ENCODE measurements at regions of chr22 and their contacts with region 1.

Region 1: GRCh38 chr22:36301384-36301828 is 48.5 kb downstream of the APOL1 start:
- DNase-seq: peak; percentile 88
- H3K4me3 Mint-ChIP-seq: no peak overlapping the region
- H3K27ac Mint-ChIP-seq: peak overlapping the region; percentile 67
- H3K4me1 Mint-ChIP-seq: peaks cover 8% of the 10 kb centered on the region
- H3K27me3 Mint-ChIP-seq: no peaks in the 10 kb centered on the region

Region 2: GRCh38 chr22:36162127-36163034 is 139.0 kb before region 1 on chr22:
- CTCF ChIA-PET with region 1: no interaction called
- POLR2A ChIA-PET with region 1: no interaction called
- intact Hi-C with region 1: no loop called
- DNase-seq: peak; percentile 37
- H3K4me3 Mint-ChIP-seq: peak overlapping the region; percentile 12
- H3K27ac Mint-ChIP-seq: peak overlapping the region; percentile 96
- H3K4me1 Mint-ChIP-seq: peaks cover 67% of the 10 kb centered on the region
- H3K27me3 Mint-ChIP-seq: no peaks in the 10 kb centered on the region

Region 3: GRCh38 chr22:36201630-36202319 is 99.6 kb before region 1 on chr22 and contains the start of gene APOL4:
- CTCF ChIA-PET with region 1: no interaction called
- POLR2A ChIA-PET with region 1: no interaction called
- intact Hi-C with region 1: no loop called
- DNase-seq: no peak
- H3K4me3 Mint-ChIP-seq: no peak within 1 kb of the TSS
- H3K27ac Mint-ChIP-seq: no peak within 1 kb of the TSS
- H3K4me1 Mint-ChIP-seq: peaks cover 14% of the 10 kb centered on the region
- H3K27me3 Mint-ChIP-seq: peaks cover 3% of the 10 kb centered on the region
- total RNA-seq, gene APOL4: 0.53 to 0.67 TPM

Region 4: GRCh38 chr22:36277482-36278291 is 23.7 kb before region 1 on chr22:
- CTCF ChIA-PET with region 1: interaction called, 10 read pairs
- POLR2A ChIA-PET with region 1: interaction called, 5 read pairs
- intact Hi-C with region 1: no loop called
- DNase-seq: peak; percentile 86
- H3K4me3 Mint-ChIP-seq: peak overlapping the region; percentile 37
- H3K27ac Mint-ChIP-seq: peak overlapping the region; percentile 75
- H3K4me1 Mint-ChIP-seq: peaks cover 39% of the 10 kb centered on the region
- H3K27me3 Mint-ChIP-seq: no peaks in the 10 kb centered on the region

Region 5: GRCh38 chr22:36311386-36312358 is 10.3 kb after region 1 on chr22:
- CTCF ChIA-PET with region 1: interaction called, 21 read pairs
- POLR2A ChIA-PET with region 1: no interaction called
- intact Hi-C with region 1: no loop called
- DNase-seq: no peak
- H3K4me3 Mint-ChIP-seq: no peak overlapping the region
- H3K27ac Mint-ChIP-seq: peak overlapping the region; percentile 54
- H3K4me1 Mint-ChIP-seq: peaks cover 2% of the 10 kb centered on the region
- H3K27me3 Mint-ChIP-seq: no peaks in the 10 kb centered on the region

Region 6: GRCh38 chr22:36379593-36380361 is 78.4 kb after region 1 on chr22:
- CTCF ChIA-PET with region 1: interaction called, 14 read pairs
- POLR2A ChIA-PET with region 1: no interaction called
- intact Hi-C with region 1: no loop called
- DNase-seq: peak; percentile 59
- H3K4me3 Mint-ChIP-seq: peak overlapping the region; percentile 67
- H3K27ac Mint-ChIP-seq: peak overlapping the region; percentile 98
- H3K4me1 Mint-ChIP-seq: peaks cover 93% of the 10 kb centered on the region
- H3K27me3 Mint-ChIP-seq: no peaks in the 10 kb centered on the region

Region 7: DNA sequence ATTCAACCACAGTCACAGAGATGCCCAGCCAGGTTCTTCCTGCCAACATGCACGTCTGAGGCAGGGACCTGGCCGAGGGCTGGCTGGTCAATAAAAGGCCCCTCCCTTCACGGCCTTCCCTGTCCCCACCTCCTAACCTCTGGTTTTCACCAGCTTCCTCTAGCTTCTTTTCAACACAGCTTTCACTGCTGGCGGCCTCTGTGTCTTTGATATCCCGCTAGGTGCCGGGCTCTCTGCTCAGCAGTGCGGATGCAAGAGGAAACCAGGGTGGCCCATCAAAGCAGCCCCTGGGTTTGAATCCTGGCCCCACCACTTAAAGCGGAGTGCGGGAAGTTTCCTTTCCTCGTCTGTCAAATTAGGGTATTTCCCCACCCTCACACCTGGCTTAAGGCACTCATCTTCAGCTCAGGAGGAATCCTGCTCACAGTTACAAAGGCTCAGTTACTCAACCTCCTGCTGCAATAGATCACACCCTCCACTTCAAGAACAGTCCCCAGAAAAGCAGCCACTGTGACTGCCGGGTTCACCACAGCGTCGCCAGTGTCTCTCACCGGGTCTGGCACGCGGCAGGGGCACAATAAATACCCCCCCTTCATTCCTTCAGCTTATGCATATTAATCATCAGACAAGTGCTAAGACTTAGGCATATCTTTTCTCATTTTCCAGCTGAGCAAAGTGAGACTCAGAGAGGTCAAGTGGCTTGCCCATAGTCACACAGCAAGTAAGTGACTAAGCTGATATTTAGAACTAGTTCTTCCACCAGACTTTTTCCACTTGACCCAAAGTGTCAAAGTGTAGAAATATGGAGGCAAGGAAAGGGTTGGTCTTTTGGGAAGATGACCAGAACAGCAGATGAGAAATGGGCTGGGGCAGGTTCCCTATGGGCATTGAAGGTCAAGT is 134.4 kb after region 1 on chr22:
- CTCF ChIA-PET with region 1: interaction called, 10 read pairs
- POLR2A ChIA-PET with region 1: no interaction called
- intact Hi-C with region 1: no loop called
- DNase-seq: peak; percentile 75
- H3K4me3 Mint-ChIP-seq: peak overlapping the region; percentile 9
- H3K27ac Mint-ChIP-seq: peak overlapping the region; percentile 84
- H3K4me1 Mint-ChIP-seq: peaks cover 39% of the 10 kb centered on the region
- H3K27me3 Mint-ChIP-seq: no peaks in the 10 kb centered on the region

Region 8: GRCh38 chr22:36486619-36487384 is 185.4 kb after region 1 on chr22:
- CTCF ChIA-PET with region 1: interaction called, 39 read pairs
- POLR2A ChIA-PET with region 1: no interaction called
- intact Hi-C with region 1: no loop called
- DNase-seq: peak; percentile 71
- H3K4me3 Mint-ChIP-seq: no peak overlapping the region
- H3K27ac Mint-ChIP-seq: no peak overlapping the region
- H3K4me1 Mint-ChIP-seq: peaks cover 3% of the 10 kb centered on the region
- H3K27me3 Mint-ChIP-seq: no peaks in the 10 kb centered on the region

Measured in activated CD4-positive, alpha-beta memory T cell treated with anti-CD3 and anti-CD28 coated beads for 36 hours (primary cell).